ENCODE measurements at regions of chr7 and their contacts with region 1.

Region 1: GRCh38 chr7:43582503-43583423 is at the start of gene STK17A:
- DNase-seq: peak; percentile 91 to 96 (median 95)
- H3K4me3 ChIP-seq: peak within 1 kb of the TSS; percentile 96
- H3K4me3 Mint-ChIP-seq: peak within 1 kb of the TSS; percentile 95 to 99 (median 96)
- H3K27ac ChIP-seq: peak within 1 kb of the TSS; percentile 94
- H3K27ac Mint-ChIP-seq: peak within 1 kb of the TSS; percentile 95 to 100 (median 96)
- H3K4me1 ChIP-seq: peaks cover 12% of the 10 kb centered on the region
- H3K4me1 Mint-ChIP-seq: peaks cover 17 to 30% (median 22%) of the 10 kb centered on the region in 3 donors
- H3K27me3 ChIP-seq: no peaks in the 10 kb centered on the region
- H3K27me3 Mint-ChIP-seq: peaks cover 0 to 7% of the 10 kb centered on the region in 2 donors
- total RNA-seq, gene STK17A: 45.5 to 45.8 TPM

Region 2: GRCh38 chr7:43602271-43602670 is 19.5 kb after region 1 on chr7:
- CTCF ChIA-PET with region 1: interaction called, 38 read pairs
- POLR2A ChIA-PET with region 1: interaction called, 8 read pairs
- DNase-seq: no peak
- H3K4me3 ChIP-seq: no peak overlapping the region
- H3K4me3 Mint-ChIP-seq: no peak overlapping the region
- H3K27ac ChIP-seq: no peak overlapping the region
- H3K27ac Mint-ChIP-seq: no peak overlapping the region
- H3K4me1 ChIP-seq: peaks cover 78% of the 10 kb centered on the region
- H3K4me1 Mint-ChIP-seq: peaks cover 23 to 54% (median 44%) of the 10 kb centered on the region in 3 donors
- H3K27me3 ChIP-seq: no peaks in the 10 kb centered on the region
- H3K27me3 Mint-ChIP-seq: no peaks in the 10 kb centered on the region

Region 3: DNA sequence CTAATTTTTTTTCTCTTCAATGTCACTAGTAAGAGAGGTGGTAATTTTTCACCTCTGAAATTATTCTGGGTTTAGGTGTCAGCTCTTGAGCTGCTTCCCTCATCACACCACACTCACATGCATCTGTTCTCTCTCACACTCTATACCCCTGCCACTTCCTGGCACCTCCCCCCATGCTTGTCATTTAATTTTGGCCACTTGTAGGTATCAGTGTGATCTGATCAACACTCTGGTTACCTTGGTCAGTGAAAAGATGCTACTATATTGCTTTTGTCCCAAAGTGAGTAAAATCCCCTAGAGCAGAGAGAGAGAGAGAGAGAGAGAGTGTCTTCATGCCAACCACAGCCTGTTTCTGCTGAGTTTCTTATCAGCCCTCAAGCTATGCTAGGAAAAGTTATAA is 42.7 kb after region 1 on chr7:
- CTCF ChIA-PET with region 1: interaction called, 44 read pairs
- POLR2A ChIA-PET with region 1: interaction called, 16 read pairs
- DNase-seq: peak; percentile 52 to 87 (median 80)
- H3K4me3 ChIP-seq: no peak overlapping the region
- H3K4me3 Mint-ChIP-seq: peak overlapping the region; percentile 35 to 77 (median 73)
- H3K27ac ChIP-seq: peak overlapping the region; percentile 40
- H3K27ac Mint-ChIP-seq: peak overlapping the region in 7 of 8 donors; percentile 62 to 94 (median 91)
- H3K4me1 ChIP-seq: peaks cover 93% of the 10 kb centered on the region
- H3K4me1 Mint-ChIP-seq: peaks cover 0 to 100% (median 90%) of the 10 kb centered on the region in 3 donors
- H3K27me3 ChIP-seq: no peaks in the 10 kb centered on the region
- H3K27me3 Mint-ChIP-seq: peaks cover 0 to 3% of the 10 kb centered on the region in 2 donors

Region 4: DNA sequence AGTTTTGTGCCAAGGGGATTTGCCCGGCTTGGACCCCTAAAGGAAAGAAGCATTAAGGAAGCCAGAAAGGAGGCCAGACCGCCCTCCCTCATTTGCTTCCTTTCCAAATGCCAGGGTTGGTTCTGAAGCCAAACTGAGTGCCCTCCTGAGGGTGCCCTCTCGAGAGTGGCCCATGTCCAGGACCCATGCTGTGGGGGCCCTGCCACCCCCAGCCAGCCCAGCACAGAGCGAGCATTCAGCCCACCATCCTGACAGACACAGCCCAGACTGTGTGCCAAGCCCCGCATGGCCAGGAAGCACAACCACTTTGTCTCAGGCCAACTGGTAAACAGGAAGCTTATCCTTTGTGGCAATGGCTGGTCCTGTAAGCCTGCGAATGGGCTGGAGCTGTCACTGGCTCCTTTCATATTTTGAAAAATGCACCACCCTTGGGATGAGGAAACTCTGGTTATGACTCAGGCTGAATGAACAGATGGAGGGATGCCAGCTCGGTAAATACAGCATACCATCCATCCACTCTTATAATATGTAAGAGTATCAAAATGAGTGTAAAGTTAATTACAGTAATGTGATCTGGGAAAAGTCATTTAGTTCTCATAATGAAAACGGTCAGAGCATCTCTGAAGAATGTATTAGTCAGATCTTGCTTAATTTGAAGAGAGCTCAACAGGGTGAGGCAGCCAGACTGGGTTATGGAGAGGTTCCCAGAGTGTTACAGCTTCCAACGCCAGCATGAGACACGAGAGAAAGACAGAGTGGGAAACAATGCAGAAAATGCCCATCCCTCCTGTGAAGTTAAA is 65.1 kb after region 1 on chr7:
- CTCF ChIA-PET with region 1: interaction called, 69 read pairs
- POLR2A ChIA-PET with region 1: interaction called, 48 read pairs
- DNase-seq: peak in 2 of 5 donors; percentile 40 to 57
- H3K4me3 ChIP-seq: peak overlapping the region; percentile 64
- H3K4me3 Mint-ChIP-seq: peak overlapping the region; percentile 63 to 95 (median 78)
- H3K27ac ChIP-seq: peak overlapping the region; percentile 71
- H3K27ac Mint-ChIP-seq: peak overlapping the region; percentile 73 to 100 (median 96)
- H3K4me1 ChIP-seq: peaks cover 94% of the 10 kb centered on the region
- H3K4me1 Mint-ChIP-seq: peaks cover 97 to 99% (median 98%) of the 10 kb centered on the region in 3 donors
- H3K27me3 ChIP-seq: no peaks in the 10 kb centered on the region
- H3K27me3 Mint-ChIP-seq: no peaks in the 10 kb centered on the region

Region 5: DNA sequence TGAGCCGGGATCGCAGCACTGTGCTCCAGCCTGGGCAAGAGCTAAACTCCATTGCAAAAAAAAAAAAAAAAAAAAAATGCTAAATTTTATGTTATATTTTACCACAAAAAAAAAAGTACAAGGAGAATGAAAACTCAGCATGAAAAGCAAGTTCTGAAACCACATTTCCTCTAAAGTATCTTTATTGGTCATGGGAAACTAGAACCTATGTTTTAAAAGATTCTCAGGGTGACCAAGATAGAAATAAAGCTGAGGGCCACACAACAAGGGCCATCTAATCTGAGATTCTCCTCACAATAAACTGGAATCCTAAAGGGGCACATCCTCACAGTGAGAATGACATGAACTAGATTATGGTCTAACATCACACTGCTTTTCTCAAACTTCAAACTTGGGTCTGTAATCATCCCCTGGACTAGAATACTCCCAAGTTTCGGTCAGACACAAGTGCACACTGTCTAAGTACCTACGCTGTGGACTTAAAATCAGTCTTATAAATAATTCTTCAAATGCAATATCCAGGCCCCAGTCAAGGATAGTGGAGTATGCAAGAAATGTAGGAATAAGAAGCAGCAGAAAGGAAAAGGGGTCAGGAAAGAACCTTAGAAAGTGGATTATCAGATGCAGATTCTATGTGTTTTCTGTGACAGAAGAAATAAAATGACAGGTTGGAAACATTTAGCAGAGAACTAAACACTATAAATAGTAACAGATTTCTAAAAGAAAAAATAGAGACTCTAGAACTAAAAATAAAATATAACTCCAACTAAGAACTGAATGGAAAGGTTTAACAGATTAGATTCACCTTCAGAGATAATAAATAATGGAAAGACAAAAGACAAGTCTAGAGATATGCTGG is 96.7 kb after region 1 on chr7:
- CTCF ChIA-PET with region 1: interaction called, 16 read pairs
- POLR2A ChIA-PET with region 1: no interaction called
- DNase-seq: no peak
- H3K4me3 ChIP-seq: no peak overlapping the region
- H3K4me3 Mint-ChIP-seq: peak overlapping the region in 6 of 7 donors; percentile 1 to 76 (median 16)
- H3K27ac ChIP-seq: no peak overlapping the region
- H3K27ac Mint-ChIP-seq: peak overlapping the region; percentile 43 to 95 (median 76)
- H3K4me1 ChIP-seq: peaks cover 41% of the 10 kb centered on the region
- H3K4me1 Mint-ChIP-seq: peaks cover 66 to 91% (median 83%) of the 10 kb centered on the region in 3 donors
- H3K27me3 ChIP-seq: no peaks in the 10 kb centered on the region
- H3K27me3 Mint-ChIP-seq: no peaks in the 10 kb centered on the region

Region 6: DNA sequence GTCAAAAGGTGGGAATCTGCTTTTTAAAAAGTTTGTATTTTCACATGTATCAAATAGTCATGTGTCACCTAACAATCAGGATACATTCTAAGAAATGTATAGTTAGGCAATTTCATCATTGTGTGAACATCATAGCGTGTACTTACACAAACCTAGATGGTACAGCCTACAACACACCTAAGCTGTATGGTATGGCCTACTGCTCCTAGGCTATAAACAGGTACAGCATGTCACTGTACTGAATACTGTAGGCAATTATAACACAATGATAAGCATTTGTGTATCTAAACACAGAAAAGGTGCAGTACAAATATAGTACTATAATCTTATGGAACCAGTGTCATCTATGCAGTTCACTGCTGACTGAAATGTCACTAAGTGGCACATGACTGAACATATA is 128.7 kb after region 1 on chr7:
- CTCF ChIA-PET with region 1: interaction called, 116 read pairs
- POLR2A ChIA-PET with region 1: no interaction called
- DNase-seq: no peak
- H3K4me3 ChIP-seq: no peak overlapping the region
- H3K4me3 Mint-ChIP-seq: no peak overlapping the region
- H3K27ac ChIP-seq: no peak overlapping the region
- H3K27ac Mint-ChIP-seq: no peak overlapping the region
- H3K4me1 ChIP-seq: no peaks in the 10 kb centered on the region
- H3K4me1 Mint-ChIP-seq: peaks cover 33 to 55% (median 41%) of the 10 kb centered on the region in 3 donors
- H3K27me3 ChIP-seq: no peaks in the 10 kb centered on the region
- H3K27me3 Mint-ChIP-seq: no peaks in the 10 kb centered on the region

Region 7: DNA sequence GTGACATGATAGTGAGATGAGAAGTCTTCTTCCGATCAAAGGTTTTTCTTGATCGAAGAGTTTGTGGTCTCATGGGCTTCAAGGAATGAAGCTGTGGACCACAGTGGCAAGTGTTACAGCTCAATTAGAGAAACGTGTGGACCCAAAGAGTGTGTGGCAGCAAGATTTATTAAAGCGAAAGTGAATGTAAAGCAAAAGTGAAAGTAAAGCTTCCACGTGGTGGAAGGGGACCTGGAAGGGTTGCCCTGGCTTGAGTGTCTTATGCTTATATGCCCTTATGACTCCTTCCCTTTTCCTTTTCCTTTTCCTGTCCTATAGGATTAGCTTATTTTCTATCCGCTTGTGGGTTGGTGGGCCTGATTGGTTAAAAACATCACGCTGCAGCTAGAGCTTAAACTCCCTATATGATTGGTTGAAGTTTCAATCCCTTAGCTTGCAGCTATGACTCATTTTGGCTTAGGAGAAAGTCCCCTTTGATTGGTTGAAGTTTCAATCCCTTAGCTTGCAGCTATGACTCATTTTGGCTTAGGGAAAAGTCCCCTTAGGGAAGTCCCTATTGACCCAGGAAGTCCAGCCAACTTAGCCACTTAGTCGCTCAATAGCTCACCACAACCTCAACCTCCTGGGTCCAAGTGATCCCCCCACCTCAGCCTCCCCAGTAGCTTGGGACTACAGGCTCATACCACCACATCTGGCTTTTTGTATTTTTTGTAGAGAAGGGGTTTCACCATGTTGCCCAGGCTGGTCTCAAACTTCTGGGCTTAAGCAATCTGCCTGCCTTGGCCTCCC is 251.9 kb after region 1 on chr7:
- CTCF ChIA-PET with region 1: interaction called, 62 read pairs
- POLR2A ChIA-PET with region 1: interaction called, 8 read pairs
- DNase-seq: peak; percentile 7 to 62 (median 42)
- H3K4me3 ChIP-seq: peak overlapping the region; percentile 51
- H3K4me3 Mint-ChIP-seq: peak overlapping the region; percentile 86 to 94 (median 90)
- H3K27ac ChIP-seq: peak overlapping the region; percentile 29
- H3K27ac Mint-ChIP-seq: peak overlapping the region; percentile 93 to 99 (median 98)
- H3K4me1 ChIP-seq: peaks cover 16% of the 10 kb centered on the region
- H3K4me1 Mint-ChIP-seq: peaks cover 19 to 32% (median 23%) of the 10 kb centered on the region in 3 donors
- H3K27me3 ChIP-seq: no peaks in the 10 kb centered on the region
- H3K27me3 Mint-ChIP-seq: peaks cover 0 to 3% of the 10 kb centered on the region in 2 donors

Region 8: GRCh38 chr7:44477063-44477830 is 894.5 kb after region 1 on chr7:
- CTCF ChIA-PET with region 1: no interaction called
- POLR2A ChIA-PET with region 1: no interaction called
- DNase-seq: peak; percentile 37 to 75 (median 59)
- H3K4me3 ChIP-seq: no peak overlapping the region
- H3K4me3 Mint-ChIP-seq: no peak overlapping the region
- H3K27ac ChIP-seq: no peak overlapping the region
- H3K27ac Mint-ChIP-seq: peak overlapping the region in 6 of 8 donors; percentile 8 to 95 (median 72)
- H3K4me1 ChIP-seq: peaks cover 8% of the 10 kb centered on the region
- H3K4me1 Mint-ChIP-seq: peaks cover 34 to 69% (median 61%) of the 10 kb centered on the region in 3 donors
- H3K27me3 ChIP-seq: no peaks in the 10 kb centered on the region
- H3K27me3 Mint-ChIP-seq: no peaks in the 10 kb centered on the region